HCT116 (cell line): ENCODE measurements at regions of chr16 and their contacts with region 1.

Region 1: DNA sequence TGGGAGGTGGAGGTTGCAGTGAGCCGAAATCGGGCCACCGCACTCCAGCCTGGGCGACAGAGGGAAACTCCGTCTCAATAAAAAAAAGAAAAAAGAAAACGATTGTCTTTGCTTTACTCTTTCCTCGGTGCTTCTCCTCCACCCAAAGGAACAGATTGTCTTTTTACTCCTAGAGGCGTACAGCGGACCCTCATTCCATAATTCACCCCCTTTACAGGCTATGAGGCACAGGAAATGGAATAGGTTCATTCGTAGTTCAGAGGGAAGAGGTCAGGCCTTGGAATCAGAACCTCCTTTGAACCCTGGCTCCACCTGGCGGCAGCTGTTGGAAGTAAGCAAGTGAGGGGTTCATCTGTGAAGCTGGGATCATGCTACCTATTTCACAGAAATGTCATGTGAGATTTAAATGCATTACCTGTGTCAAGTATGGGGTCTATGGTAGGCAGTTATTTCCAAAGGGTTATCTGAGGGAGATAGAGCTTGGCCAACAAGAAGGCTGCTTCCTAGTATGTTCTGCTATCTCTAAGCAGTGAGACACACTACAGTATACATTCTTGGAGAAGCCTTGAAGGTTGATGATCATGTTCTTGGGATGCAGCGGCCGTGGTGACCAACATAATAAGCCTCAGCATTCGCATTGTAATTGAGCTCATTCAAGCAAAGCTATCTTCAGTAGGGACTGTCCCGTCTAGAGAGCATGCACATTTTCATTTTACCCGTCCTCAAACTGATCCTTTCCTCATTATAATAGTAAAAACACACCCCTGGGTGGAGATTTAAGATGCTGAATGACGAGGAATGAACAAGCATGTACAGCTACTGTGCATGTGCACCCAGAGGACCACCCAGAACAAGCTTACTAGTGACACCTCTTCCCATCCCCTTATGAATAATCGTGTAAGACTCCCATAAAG is 18.7 kb upstream of the ZNF689 start:
- DNase-seq: peak; percentile 70
- ATAC-seq: peak; percentile 94
- H3K4me3 ChIP-seq: no peak overlapping the region
- H3K27ac ChIP-seq: 0 out of 2 replicates have a peak overlapping the region, but pooled peaks have one; percentile 18
- H3K4me1 ChIP-seq: peaks cover 4 to 14% of the 10 kb centered on the region in 2 experiments; a peak in 3 of 4 replicates
- H3K27me3 ChIP-seq: no peaks in the 10 kb centered on the region
- CTCF ChIP-seq: peak; percentile 86 to 94 (median 93)
- POLR2A ChIP-seq: no peak
- RAD21 ChIP-seq: peak; percentile 89

Region 2: DNA sequence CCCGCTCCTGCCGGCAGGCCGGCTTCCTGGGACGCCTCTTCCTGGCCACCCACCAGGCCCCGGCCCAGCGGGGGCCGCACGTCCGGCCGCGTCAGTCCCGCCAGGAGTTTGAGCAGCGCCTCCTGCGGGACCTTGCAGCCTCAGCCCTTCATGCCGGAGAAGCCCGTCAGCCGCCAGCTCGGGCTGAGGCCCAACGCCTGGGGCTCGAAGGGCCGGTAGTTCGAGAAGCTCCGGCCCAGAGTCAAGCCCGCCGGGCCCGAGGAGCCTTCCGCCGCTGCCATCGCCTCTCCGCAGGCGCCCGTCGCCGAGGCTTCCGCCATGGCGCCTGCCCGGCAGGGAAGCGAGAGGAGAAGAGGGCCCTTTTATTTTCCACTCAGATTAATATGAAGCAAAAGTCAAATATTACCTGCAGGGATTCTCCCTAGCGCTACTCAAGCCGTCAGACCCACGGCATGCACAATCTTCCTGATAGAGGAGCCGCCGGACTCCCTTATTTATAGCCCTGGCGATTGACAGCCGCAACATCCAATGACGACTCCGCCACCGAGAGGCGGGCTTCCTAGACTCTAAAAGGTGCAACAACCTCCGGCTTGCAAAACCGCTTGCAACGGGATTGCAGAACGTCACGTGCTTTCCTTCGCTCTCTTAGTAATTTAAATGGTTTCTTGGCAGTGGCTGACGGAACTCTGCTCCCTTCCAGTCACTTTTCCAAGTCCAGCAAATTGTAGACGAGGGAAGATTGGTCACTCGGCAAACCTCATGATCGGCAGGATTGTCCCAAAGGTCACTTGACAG is 183.3 kb before region 1 on chr16 and contains the start of gene SEPHS2:
- CTCF ChIA-PET with region 1: interaction called, 5 read pairs
- POLR2A ChIA-PET with region 1: no interaction called
- RAD21 ChIA-PET with region 1: no interaction called
- intact Hi-C with region 1: loop called (anchors 5 kb)
- DNase-seq: peak; percentile 96
- ATAC-seq: peak; percentile 92
- H3K4me3 ChIP-seq: peak within 1 kb of the TSS; percentile 80 to 90
- H3K27ac ChIP-seq: peak within 1 kb of the TSS; percentile 86
- H3K4me1 ChIP-seq: peaks cover 5 to 20% of the 10 kb centered on the region in 2 experiments
- H3K27me3 ChIP-seq: no peaks in the 10 kb centered on the region
- CTCF ChIP-seq: peak in 2 of 3 experiments; percentile 50 to 52; a peak in 5 of 6 replicates
- POLR2A ChIP-seq: peak; percentile 98
- RAD21 ChIP-seq: 0 out of 2 replicates have a peak, but pooled peaks have one; percentile 23
- total RNA-seq, gene SEPHS2: 51.3 TPM

Region 3: GRCh38 chr16:30571695-30572600 is 56.9 kb before region 1 on chr16 and contains the start of gene ZNF688:
- CTCF ChIA-PET with region 1: interaction called, 3 read pairs
- POLR2A ChIA-PET with region 1: interaction called, 3 read pairs
- RAD21 ChIA-PET with region 1: no interaction called
- intact Hi-C with region 1: loop called (anchors 5 kb)
- DNase-seq: peak; percentile 93
- ATAC-seq: peak; percentile 85
- H3K4me3 ChIP-seq: peak within 1 kb of the TSS; percentile 83 to 90
- H3K27ac ChIP-seq: peak within 1 kb of the TSS; percentile 87
- H3K4me1 ChIP-seq: peaks cover 9 to 39% of the 10 kb centered on the region in 2 experiments; a peak in 3 of 4 replicates
- H3K27me3 ChIP-seq: no peaks in the 10 kb centered on the region
- CTCF ChIP-seq: no peak
- POLR2A ChIP-seq: peak; percentile 47
- RAD21 ChIP-seq: no peak
- total RNA-seq, gene ZNF688: 3.6 TPM

Region 4: DNA sequence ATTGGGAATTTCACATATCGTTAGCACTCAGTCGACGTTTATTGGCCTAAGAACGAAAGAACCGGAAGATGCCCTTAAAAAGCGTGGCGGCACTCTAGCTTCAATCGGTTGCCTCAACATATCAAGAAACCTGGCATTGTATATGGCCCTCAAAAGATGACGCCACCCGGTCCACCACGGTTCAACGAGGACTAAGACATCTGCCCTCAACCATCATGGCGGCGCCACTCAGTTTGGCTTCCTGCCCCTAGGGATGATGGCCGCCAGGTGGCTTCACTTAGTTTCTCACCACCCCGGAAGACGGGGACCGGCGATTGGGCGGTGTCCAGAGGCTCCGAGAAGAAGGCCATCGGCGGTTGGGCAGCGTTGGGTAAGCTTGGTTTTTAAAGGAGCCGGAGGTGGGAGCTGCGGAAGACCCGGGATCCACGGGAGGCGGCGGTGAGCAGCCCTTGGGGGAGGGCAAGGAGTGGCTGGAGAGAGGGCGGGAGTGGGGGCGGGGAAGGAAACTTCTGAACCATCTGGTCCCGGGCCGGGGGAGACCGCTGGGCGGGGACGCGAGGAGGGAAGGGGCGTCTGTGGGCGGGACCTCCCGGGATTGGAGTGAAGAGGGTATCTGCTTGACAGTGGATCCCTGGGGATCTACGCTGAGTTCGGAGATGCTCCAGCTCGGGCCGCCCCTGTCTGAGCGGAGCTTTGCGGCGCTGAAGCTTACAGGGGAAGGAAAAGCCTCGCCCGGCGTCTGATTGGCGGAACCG is 21.7 kb after region 1 on chr16 and contains the start of gene PRR14:
- CTCF ChIA-PET with region 1: interaction called, 4 read pairs
- POLR2A ChIA-PET with region 1: interaction called, 12 read pairs
- RAD21 ChIA-PET with region 1: no interaction called
- intact Hi-C with region 1: no loop called
- DNase-seq: peak; percentile 97
- ATAC-seq: peak; percentile 85
- H3K4me3 ChIP-seq: peak within 1 kb of the TSS; percentile 93 to 97
- H3K27ac ChIP-seq: peak within 1 kb of the TSS; percentile 88
- H3K4me1 ChIP-seq: peaks cover 7 to 16% of the 10 kb centered on the region in 2 experiments; a peak in 3 of 4 replicates
- H3K27me3 ChIP-seq: no peaks in the 10 kb centered on the region
- CTCF ChIP-seq: no peak
- POLR2A ChIP-seq: no peak
- RAD21 ChIP-seq: no peak
- total RNA-seq, gene PRR14: 56.2 TPM